ENCODE measurements at regions of chr22 and their contacts with region 1.

Region 1: GRCh38 chr22:44259366-44260215 is 53.2 kb downstream of the SHISAL1 start:
- DNase-seq: no peak
- ATAC-seq: no peak
- H3K4me3 ChIP-seq: no peak overlapping the region
- H3K4me3 Mint-ChIP-seq: no peak overlapping the region
- H3K27ac ChIP-seq: no peak overlapping the region
- H3K27ac Mint-ChIP-seq: no peak overlapping the region
- H3K4me1 ChIP-seq: no peaks in the 10 kb centered on the region
- H3K4me1 Mint-ChIP-seq: no peaks in the 10 kb centered on the region
- H3K27me3 ChIP-seq: peaks cover 0 to 2% (median 0%) of the 10 kb centered on the region in 4 experiments
- H3K27me3 Mint-ChIP-seq: peaks cover 32% of the 10 kb centered on the region
- CTCF ChIP-seq: no peak

Region 2: GRCh38 chr22:44098083-44098739 is 161.4 kb before region 1 on chr22:
- CTCF ChIA-PET with region 1: no interaction called
- POLR2A ChIA-PET with region 1: no interaction called
- intact Hi-C with region 1: no loop called
- DNase-seq: no peak
- ATAC-seq: no peak
- H3K4me3 ChIP-seq: no peak overlapping the region
- H3K4me3 Mint-ChIP-seq: no peak overlapping the region
- H3K27ac ChIP-seq: no peak overlapping the region
- H3K27ac Mint-ChIP-seq: no peak overlapping the region
- H3K4me1 ChIP-seq: no peaks in the 10 kb centered on the region
- H3K4me1 Mint-ChIP-seq: no peaks in the 10 kb centered on the region
- H3K27me3 ChIP-seq: no peaks in the 10 kb centered on the region
- H3K27me3 Mint-ChIP-seq: no peaks in the 10 kb centered on the region
- CTCF ChIP-seq: no peak

Region 3: GRCh38 chr22:44172370-44173108 is 87.1 kb before region 1 on chr22:
- CTCF ChIA-PET with region 1: no interaction called
- POLR2A ChIA-PET with region 1: no interaction called
- intact Hi-C with region 1: loop called (anchors 10 kb)
- DNase-seq: peak; percentile 78
- ATAC-seq: peak; percentile 99
- H3K4me3 ChIP-seq: peak overlapping the region in 2 of 5 experiments; percentile 1 to 28
- H3K4me3 Mint-ChIP-seq: peak overlapping the region; percentile 36
- H3K27ac ChIP-seq: peak overlapping the region; percentile 43 to 55
- H3K27ac Mint-ChIP-seq: peak overlapping the region; percentile 88
- H3K4me1 ChIP-seq: peaks cover 18 to 24% of the 10 kb centered on the region in 2 donors
- H3K4me1 Mint-ChIP-seq: peaks cover 22% of the 10 kb centered on the region
- H3K27me3 ChIP-seq: no peaks in the 10 kb centered on the region
- H3K27me3 Mint-ChIP-seq: no peaks in the 10 kb centered on the region
- CTCF ChIP-seq: no peak

Region 4: GRCh38 chr22:44391481-44392445 is 132.2 kb after region 1 on chr22:
- CTCF ChIA-PET with region 1: no interaction called
- POLR2A ChIA-PET with region 1: no interaction called
- intact Hi-C with region 1: no loop called
- DNase-seq: no peak
- ATAC-seq: no peak
- H3K4me3 ChIP-seq: no peak overlapping the region
- H3K4me3 Mint-ChIP-seq: no peak overlapping the region
- H3K27ac ChIP-seq: no peak overlapping the region
- H3K27ac Mint-ChIP-seq: no peak overlapping the region
- H3K4me1 ChIP-seq: no peaks in the 10 kb centered on the region
- H3K4me1 Mint-ChIP-seq: no peaks in the 10 kb centered on the region
- H3K27me3 ChIP-seq: peaks cover 0 to 2% (median 0%) of the 10 kb centered on the region in 4 experiments
- H3K27me3 Mint-ChIP-seq: peaks cover 35% of the 10 kb centered on the region
- CTCF ChIP-seq: no peak